A673 (cell line): ENCODE measurements at regions of chr10 and their contacts with region 1.

Region 1: DNA sequence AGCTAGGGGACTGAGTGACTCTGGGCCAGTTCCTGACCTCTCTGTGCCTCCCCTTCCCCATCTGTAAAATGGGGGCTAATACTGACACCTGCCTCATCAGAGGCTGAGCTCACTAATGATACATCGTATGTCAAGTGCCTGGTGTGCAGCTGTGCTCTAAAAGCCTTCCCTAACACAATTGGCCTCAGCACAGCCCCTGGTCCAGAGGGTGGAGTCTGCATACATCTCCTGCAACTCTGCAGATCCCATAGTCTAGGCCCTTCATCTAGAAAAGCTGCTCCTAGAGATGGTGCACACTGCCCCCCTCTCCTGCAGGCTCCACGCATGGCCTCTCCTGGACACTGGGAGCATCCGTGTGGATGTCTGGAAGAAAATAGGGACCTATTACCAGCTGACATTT is 255.0 kb downstream of the RPS24 start:
- DNase-seq: no peak
- H3K4me3 ChIP-seq: no peak overlapping the region
- H3K27ac ChIP-seq: no peak overlapping the region
- H3K4me1 ChIP-seq: peaks cover 16% of the 10 kb centered on the region
- H3K27me3 ChIP-seq: no peaks in the 10 kb centered on the region
- CTCF ChIP-seq: no peak

Region 2: DNA sequence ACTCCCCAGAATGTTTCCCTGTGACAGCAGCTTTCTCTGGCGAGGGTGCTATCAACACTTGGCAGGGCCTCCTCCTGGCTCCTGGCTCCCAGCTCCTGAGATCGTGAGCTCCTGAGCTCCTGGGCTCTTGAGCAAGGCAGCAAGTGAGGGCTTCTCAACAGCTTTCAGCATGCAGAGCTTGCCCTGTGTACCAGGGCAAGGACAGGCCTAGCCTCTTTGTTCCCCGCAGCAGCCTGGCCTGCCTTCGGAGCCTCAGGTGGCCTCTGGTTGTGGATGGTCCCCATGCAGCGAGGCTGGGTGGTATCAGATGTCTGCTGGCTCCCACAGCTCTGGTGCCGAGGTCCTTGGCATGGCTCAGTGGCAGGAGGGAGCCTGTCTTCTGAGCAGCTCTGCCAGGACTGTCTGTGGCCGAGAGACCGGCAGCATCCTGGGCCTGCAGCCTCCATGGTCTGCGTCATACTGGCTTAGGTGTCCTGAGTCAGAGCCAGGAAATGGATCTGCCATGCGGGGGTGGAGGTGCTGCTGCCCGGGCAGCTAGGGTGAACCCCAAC is 824.3 kb after region 1 on chr10:
- CTCF ChIA-PET with region 1: no interaction called
- POLR2A ChIA-PET with region 1: no interaction called
- intact Hi-C with region 1: no loop called
- DNase-seq: no peak
- H3K4me3 ChIP-seq: no peak overlapping the region
- H3K27ac ChIP-seq: peak overlapping the region; percentile 74
- H3K4me1 ChIP-seq: peaks cover 35% of the 10 kb centered on the region
- H3K27me3 ChIP-seq: no peaks in the 10 kb centered on the region
- CTCF ChIP-seq: no peak

Region 3: GRCh38 chr10:79202188-79203013 is 913.7 kb after region 1 on chr10:
- CTCF ChIA-PET with region 1: interaction called, 16 read pairs
- POLR2A ChIA-PET with region 1: no interaction called
- intact Hi-C with region 1: no loop called
- DNase-seq: peak; percentile 66
- H3K4me3 ChIP-seq: no peak overlapping the region
- H3K27ac ChIP-seq: no peak overlapping the region
- H3K4me1 ChIP-seq: peaks cover 6% of the 10 kb centered on the region
- H3K27me3 ChIP-seq: no peaks in the 10 kb centered on the region
- CTCF ChIP-seq: peak; percentile 72